CD14-positive monocyte (primary cell): ENCODE measurements at regions of chr22 and their contacts with region 1.

Region 1: DNA sequence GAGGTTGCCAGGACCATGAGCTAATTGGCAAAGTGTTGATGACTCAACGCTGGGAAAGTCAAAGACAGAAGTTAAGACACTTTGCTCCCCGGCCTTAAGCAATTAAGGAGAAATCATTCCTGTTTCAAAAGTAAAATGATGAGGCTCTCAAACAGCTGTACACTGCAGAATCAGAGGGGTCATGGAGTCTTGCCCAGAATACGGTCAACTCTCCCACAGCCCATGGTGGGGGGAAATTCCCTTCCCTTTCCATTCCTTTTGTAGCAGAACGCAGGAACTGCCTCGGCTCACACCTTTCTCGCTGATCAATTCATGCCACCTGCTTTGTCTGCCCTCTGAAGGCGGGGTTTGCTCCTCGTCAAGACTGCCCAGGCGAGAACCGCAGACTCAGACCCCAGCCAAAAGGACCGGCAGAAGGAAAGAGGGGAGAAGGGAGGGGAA is 52.8 kb downstream of the MN1 start:
- DNase-seq: peak in 2 of 3 donors; percentile 57 to 81
- H3K4me3 ChIP-seq: no peak overlapping the region
- H3K4me3 Mint-ChIP-seq: peak overlapping the region in 1 of 2 donors; percentile 8
- H3K27ac ChIP-seq: no peak overlapping the region
- H3K27ac Mint-ChIP-seq: peak overlapping the region in 1 of 7 donors; percentile 27
- H3K4me1 ChIP-seq: peaks cover 0 to 13% of the 10 kb centered on the region in 2 donors
- H3K4me1 Mint-ChIP-seq: peaks cover 20% of the 10 kb centered on the region
- H3K27me3 ChIP-seq: no peaks in the 10 kb centered on the region
- H3K27me3 Mint-ChIP-seq: peaks cover 2 to 14% (median 8%) of the 10 kb centered on the region in 3 donors
- CTCF ChIP-seq: no peak

Region 2: GRCh38 chr22:27576815-27577573 is 171.8 kb before region 1 on chr22:
- intact Hi-C with region 1: no loop called
- DNase-seq: no peak
- H3K4me3 ChIP-seq: no peak overlapping the region
- H3K4me3 Mint-ChIP-seq: no peak overlapping the region
- H3K27ac ChIP-seq: no peak overlapping the region
- H3K27ac Mint-ChIP-seq: no peak overlapping the region
- H3K4me1 ChIP-seq: peaks cover 5 to 14% of the 10 kb centered on the region in 2 donors
- H3K4me1 Mint-ChIP-seq: peaks cover 27% of the 10 kb centered on the region
- H3K27me3 ChIP-seq: no peaks in the 10 kb centered on the region
- H3K27me3 Mint-ChIP-seq: peaks cover 8 to 14% (median 9%) of the 10 kb centered on the region in 3 donors
- CTCF ChIP-seq: no peak

Region 3: GRCh38 chr22:27686534-27686933 is 62.2 kb before region 1 on chr22:
- intact Hi-C with region 1: loop called in 1 of 2 experiments (anchors 5 kb)
- DNase-seq: no peak
- H3K4me3 ChIP-seq: no peak overlapping the region
- H3K4me3 Mint-ChIP-seq: no peak overlapping the region
- H3K27ac ChIP-seq: no peak overlapping the region
- H3K27ac Mint-ChIP-seq: peak overlapping the region in 1 of 7 donors; percentile 23
- H3K4me1 ChIP-seq: no peaks in the 10 kb centered on the region
- H3K4me1 Mint-ChIP-seq: no peaks in the 10 kb centered on the region
- H3K27me3 ChIP-seq: no peaks in the 10 kb centered on the region
- H3K27me3 Mint-ChIP-seq: peaks cover 0 to 3% (median 0%) of the 10 kb centered on the region in 3 donors
- CTCF ChIP-seq: no peak